ENCODE measurements at regions of chr18 and their contacts with region 1.

Region 1: DNA sequence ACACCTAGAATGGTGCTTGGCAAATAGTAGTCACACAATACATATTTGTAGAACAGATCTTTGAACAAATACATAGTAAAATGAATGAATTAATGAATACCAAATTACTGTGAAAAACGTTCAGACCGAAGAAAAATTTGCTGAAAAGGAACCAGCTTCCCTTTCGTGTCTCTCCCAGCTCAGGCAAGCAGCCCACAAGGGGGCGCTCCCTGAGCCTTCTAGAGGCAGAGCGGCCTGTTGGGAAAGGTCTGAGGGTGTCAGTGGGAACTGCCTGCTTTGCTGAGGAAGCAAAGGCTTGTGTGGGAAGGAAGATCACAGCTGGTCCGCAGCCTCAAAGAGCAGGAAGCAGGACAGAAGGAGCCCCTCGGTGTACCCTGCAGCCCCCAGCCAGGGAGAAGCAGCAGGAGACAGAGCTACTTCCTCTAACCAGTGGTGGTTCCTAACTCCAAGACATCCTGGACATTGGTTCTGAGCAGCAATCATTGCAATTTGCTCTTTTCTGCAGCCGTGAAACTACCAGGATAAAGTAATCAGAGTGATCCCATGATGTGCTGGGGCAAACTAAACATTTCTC is 231.1 kb downstream of the ANKRD30B start:
- DNase-seq: no peak
- ATAC-seq: no peak
- H3K4me3 ChIP-seq: no peak overlapping the region
- H3K27ac ChIP-seq: no peak overlapping the region
- H3K4me1 ChIP-seq: no peaks in the 10 kb centered on the region
- H3K27me3 ChIP-seq: no peaks in the 10 kb centered on the region
- CTCF ChIP-seq: no peak
- POLR2A ChIP-seq: no peak
- RAD21 ChIP-seq: no peak

Region 2: GRCh38 chr18:13124411-13124810 is 1854.6 kb before region 1 on chr18:
- CTCF ChIA-PET with region 1: no interaction called
- POLR2A ChIA-PET with region 1: no interaction called
- dilution Hi-C with region 1: no loop called
- in situ Hi-C with region 1: no loop called
- intact Hi-C with region 1: no loop called
- DNase-seq: no peak
- ATAC-seq: no peak
- H3K4me3 ChIP-seq: no peak overlapping the region
- H3K27ac ChIP-seq: no peak overlapping the region
- H3K4me1 ChIP-seq: 0 out of 2 replicates have a peak, but pooled peaks cover 2% of the 10 kb centered on the region
- H3K27me3 ChIP-seq: no peaks in the 10 kb centered on the region
- CTCF ChIP-seq: no peak
- POLR2A ChIP-seq: no peak
- RAD21 ChIP-seq: no peak

Region 3: GRCh38 chr18:14914126-14914525 is 64.9 kb before region 1 on chr18:
- CTCF ChIA-PET with region 1: no interaction called
- POLR2A ChIA-PET with region 1: no interaction called
- dilution Hi-C with region 1: no loop called
- in situ Hi-C with region 1: loop called (anchors 10 kb)
- intact Hi-C with region 1: no loop called
- DNase-seq: no peak
- ATAC-seq: no peak
- H3K4me3 ChIP-seq: no peak overlapping the region
- H3K27ac ChIP-seq: no peak overlapping the region
- H3K4me1 ChIP-seq: no peaks in the 10 kb centered on the region
- H3K27me3 ChIP-seq: no peaks in the 10 kb centered on the region
- CTCF ChIP-seq: no peak
- POLR2A ChIP-seq: no peak
- RAD21 ChIP-seq: no peak